Posterior vena cava (tissue), 2 donors: ENCODE measurements at regions of chr12 and their contacts with region 1.

Region 1: DNA sequence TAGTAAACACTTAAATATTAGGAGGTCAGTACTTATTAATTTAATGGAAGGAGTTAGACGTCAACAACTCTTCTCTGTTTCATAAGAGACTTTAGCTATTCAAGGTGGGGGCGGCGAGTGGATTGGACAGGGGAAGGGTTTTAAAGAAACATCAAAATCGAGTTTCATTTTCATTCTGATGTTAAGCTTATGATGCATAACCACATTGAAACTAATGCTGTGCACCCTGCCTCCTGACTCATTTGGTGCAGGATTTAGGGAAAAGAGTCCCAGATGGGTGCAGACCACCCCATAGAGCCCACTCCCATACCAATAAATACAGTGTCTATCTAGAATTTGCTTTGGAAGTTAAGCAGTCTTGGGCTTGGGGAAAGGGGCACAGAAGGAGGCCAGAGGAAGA is 7.4 kb downstream of the ZBTB39 start:
- DNase-seq: no peak

Region 2: DNA sequence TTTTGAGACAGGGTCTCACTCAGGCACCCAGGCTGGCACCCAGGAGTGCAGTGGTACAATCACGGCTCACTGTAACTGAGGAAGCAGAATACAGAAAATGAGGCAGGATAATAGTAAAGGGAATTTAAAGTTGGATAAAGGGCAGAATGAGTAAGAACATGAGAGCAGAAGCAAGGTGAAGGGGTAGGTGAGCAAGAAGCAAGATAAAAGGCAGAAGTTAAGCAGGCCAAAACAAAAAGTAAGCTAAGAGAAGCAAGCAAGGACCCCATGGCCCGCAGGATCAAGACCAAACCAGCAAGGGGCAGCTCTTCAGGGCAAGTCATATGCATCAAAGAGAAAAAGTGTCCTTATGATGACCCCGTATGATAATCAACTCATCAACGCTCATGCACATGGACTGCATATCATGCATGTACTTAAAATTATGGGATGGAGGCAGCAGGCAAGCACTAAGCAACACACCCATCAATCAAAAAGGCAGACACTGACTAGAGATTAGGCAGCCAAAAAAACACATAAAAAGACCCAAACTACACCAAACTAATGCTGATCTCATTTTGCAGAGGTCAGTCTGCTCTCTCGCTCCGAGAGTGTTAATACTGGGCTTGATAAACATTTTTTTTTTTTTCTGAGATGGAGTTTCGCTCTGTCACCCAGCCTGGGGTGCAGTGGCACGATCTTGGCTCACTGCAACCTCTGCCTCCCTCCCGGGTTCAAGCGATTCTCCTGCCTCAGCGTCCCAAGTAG is 561.4 kb before region 1 on chr12:
- intact Hi-C with region 1: no loop called
- DNase-seq: no peak

Region 3: DNA sequence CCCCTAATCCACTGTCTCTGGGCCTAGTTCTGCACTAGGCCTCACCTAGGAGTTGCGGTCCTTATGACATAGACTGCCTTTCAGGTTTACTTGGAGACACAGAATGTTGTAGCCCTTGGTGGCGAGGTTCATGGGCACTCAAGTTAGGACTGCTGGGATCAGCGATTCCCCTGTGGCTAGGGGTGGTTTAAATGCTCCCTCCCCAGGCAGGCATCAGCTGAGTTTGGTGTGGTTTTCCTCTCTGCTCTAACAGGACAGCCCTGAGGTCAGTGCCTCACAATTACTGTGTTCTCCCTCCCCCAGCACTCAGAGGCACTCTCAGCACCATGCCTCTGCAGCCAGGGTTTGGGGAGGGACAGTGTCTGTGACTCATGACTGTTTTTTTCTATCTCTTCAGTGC is 19.4 kb before region 1 on chr12:
- intact Hi-C with region 1: loop called in 1 of 2 experiments (anchors 2 kb)
- DNase-seq: no peak